Heart left ventricle (tissue), 16 donors: ENCODE measurements at regions of chr10 and their contacts with region 1.

Region 1: GRCh38 chr10:10792681-10793080 is 225.0 kb upstream of the CELF2 start:
- DNase-seq: no peak
- ATAC-seq: peak; percentile 27 to 78 (median 42)
- H3K4me3 ChIP-seq: peak overlapping the region in 1 of 12 donors; percentile 25
- H3K27ac ChIP-seq: peak overlapping the region in 7 of 12 donors; percentile 4 to 73 (median 27)
- H3K4me1 ChIP-seq: peaks cover 0 to 46% (median 34%) of the 10 kb centered on the region in 12 donors
- H3K27me3 ChIP-seq: no peaks in the 10 kb centered on the region
- CTCF ChIP-seq: no peak
- POLR2A ChIP-seq: no peak

Region 2: DNA sequence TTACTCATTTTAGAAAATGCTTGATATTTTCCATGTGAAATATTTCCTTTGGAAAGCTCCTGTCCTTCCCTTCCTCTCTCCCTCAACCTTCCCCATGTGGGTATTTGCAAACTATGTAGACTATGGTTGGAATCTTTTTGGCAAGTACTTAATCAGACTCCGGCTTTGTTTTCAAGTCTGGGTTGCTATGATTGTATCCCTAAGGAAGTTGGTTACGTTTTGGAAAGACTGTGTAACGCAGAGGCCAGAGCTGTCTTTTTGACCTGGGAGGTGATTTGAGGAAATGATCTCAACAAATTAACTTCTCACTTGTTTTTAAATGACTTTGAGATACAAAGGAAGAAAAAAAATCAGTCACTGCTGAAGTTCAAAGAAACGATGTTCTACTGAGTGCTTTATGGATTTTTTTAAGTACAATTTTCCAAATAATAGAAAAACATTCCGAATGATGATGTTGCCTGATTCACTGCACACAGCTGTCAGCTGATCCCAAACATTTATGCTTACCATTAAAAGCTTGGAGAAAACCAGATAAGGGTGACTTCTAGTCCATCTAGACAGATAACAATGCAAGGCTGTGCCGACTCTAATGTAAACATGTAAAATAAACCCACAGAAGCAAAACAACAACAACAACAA is 79.5 kb after region 1 on chr10:
- intact Hi-C with region 1: loop called in 2 of 10 experiments (anchors 5 to 10 kb)
- DNase-seq: peak in 3 of 5 donors; percentile 43 to 57 (median 54)
- ATAC-seq: peak; percentile 91 to 99 (median 97)
- H3K4me3 ChIP-seq: peak overlapping the region in 1 of 12 donors; percentile 20
- H3K27ac ChIP-seq: peak overlapping the region; percentile 53 to 91 (median 76)
- H3K4me1 ChIP-seq: peaks cover 0 to 29% (median 19%) of the 10 kb centered on the region in 12 donors
- H3K27me3 ChIP-seq: no peaks in the 10 kb centered on the region
- CTCF ChIP-seq: no peak
- POLR2A ChIP-seq: no peak

Region 3: DNA sequence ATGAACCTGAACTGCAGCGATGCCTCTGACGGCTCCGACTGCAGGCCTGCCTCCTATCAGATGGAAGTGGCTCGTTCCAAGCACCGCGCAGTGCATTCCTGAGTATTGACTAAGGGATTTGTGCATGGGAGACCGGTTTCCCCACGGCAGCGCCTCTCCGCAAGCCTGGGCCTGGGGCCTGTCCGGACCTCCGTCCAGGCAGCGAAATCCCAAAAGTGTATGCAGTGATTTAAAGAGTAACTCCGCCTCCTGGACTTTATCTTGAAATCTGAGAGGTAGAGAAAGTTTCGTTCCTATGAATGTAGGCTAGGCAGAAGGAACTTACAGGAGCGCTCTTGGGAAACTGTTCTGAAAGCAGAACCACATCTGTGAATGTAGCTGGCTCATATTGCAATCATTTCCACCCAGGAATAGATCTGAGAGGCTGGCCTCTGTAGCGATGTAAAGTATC is 118.8 kb after region 1 on chr10:
- intact Hi-C with region 1: loop called in 3 of 10 experiments (anchors 5 to 10 kb)
- DNase-seq: peak; percentile 51 to 80 (median 74)
- ATAC-seq: peak; percentile 43 to 84 (median 77)
- H3K4me3 ChIP-seq: peak overlapping the region in 10 of 12 donors; percentile 12 to 47 (median 30)
- H3K27ac ChIP-seq: peak overlapping the region; percentile 58 to 92 (median 80)
- H3K4me1 ChIP-seq: peaks cover 0 to 45% (median 16%) of the 10 kb centered on the region in 12 donors
- H3K27me3 ChIP-seq: no peaks in the 10 kb centered on the region
- CTCF ChIP-seq: no peak
- POLR2A ChIP-seq: no peak

Region 4: GRCh38 chr10:11036407-11037011 is 243.8 kb after region 1 on chr10:
- intact Hi-C with region 1: loop called in 1 of 10 experiments (anchors 10 kb)
- DNase-seq: peak in 1 of 5 donors; percentile 37
- ATAC-seq: peak; percentile 50 to 60 (median 59)
- H3K4me3 ChIP-seq: no peak overlapping the region
- H3K27ac ChIP-seq: peak overlapping the region in 8 of 12 donors; percentile 4 to 88 (median 65)
- H3K4me1 ChIP-seq: peaks cover 7 to 59% (median 32%) of the 10 kb centered on the region in 12 donors
- H3K27me3 ChIP-seq: no peaks in the 10 kb centered on the region
- CTCF ChIP-seq: peak; percentile 35 to 75 (median 65)
- POLR2A ChIP-seq: no peak